ENCODE measurements at regions of chr15 and their contacts with region 1.

Region 1: DNA sequence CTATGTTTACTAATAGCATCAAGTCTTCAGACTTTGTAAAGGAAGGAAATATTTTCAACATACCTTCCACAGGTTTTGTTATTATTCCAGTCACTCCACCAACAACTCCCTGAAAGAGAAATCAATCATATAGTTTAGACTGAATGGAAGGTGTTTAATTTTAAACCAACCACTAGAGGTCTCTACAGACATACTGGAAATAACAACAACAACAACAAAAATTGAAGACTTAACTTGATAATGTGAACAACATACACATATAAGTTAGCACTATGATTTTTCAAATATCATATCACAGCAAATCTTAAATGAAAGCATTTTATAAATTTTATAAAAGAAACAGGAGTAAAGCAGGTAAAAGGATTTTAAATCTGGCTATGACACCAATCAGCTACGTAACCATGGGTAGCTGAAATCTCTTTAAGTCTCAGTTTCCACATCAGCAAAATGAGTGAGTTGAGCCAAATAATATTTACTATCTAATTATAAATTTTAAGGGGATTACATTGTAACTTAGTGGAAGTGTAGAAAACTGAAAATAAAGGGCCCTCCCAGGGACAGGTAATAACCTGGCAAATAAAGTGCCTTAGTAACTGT is 188.2 kb downstream of the VPS13C start:
- DNase-seq: no peak
- ATAC-seq: peak; percentile 75; the same call in 1 of the 2 replicates
- H3K4me3 ChIP-seq: no peak overlapping the region
- H3K27ac ChIP-seq: no peak overlapping the region
- H3K4me1 ChIP-seq: no peaks in the 10 kb centered on the region
- H3K27me3 ChIP-seq: no peaks in the 10 kb centered on the region
- CTCF ChIP-seq: peak; percentile 67; the same call in 1 of the 2 replicates

Region 2: GRCh38 chr15:62071711-62072308 is 199.8 kb after region 1 on chr15:
- CTCF ChIA-PET with region 1: no interaction called
- POLR2A ChIA-PET with region 1: no interaction called
- in situ Hi-C with region 1: no loop called
- intact Hi-C with region 1: loop called (anchors 5 kb)
- DNase-seq: no peak
- ATAC-seq: no peak
- H3K4me3 ChIP-seq: no peak overlapping the region
- H3K27ac ChIP-seq: no peak overlapping the region
- H3K4me1 ChIP-seq: peaks cover 7% of the 10 kb centered on the region
- H3K27me3 ChIP-seq: 0 out of 2 replicates have a peak, but pooled peaks cover 2% of the 10 kb centered on the region
- CTCF ChIP-seq: peak; percentile 75; the same call in 1 of the 2 replicates

Region 3: DNA sequence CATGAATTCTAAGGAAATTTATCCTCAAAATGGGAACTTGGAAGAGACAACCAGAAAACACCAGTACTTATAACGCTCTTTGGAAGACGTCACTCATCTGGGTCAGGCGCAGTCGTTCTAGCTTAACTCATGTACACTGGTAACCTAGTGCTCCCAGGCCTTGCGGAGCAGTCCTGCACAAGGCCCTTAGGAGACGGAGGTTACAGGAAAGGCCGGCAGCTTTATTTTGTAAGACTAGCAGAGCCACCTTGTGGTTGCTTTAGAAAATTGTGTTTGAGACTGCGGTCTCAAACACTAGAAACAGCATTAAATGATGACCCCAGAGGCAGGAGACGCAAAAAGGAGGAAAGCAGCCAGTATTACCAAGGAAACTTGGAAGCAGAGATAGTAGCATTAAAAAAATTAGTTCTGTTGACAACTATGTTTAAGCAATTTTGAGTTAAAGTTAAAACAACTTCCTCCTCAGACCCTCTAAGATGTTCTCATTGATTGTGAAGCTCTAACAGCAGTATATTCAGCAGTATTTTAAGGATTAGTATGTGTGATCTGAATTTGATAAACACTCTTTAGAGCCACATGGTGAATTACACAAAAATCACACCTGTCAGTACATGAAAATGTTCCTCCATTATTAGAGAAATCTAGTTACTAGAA is 435.0 kb after region 1 on chr15:
- CTCF ChIA-PET with region 1: no interaction called
- POLR2A ChIA-PET with region 1: no interaction called
- in situ Hi-C with region 1: no loop called
- intact Hi-C with region 1: loop called (anchors 10 kb)
- DNase-seq: peak; percentile 25
- ATAC-seq: peak; percentile 99
- H3K4me3 ChIP-seq: no peak overlapping the region
- H3K27ac ChIP-seq: no peak overlapping the region
- H3K4me1 ChIP-seq: no peaks in the 10 kb centered on the region
- H3K27me3 ChIP-seq: peaks cover 2% of the 10 kb centered on the region; the same call in 1 of the 2 replicates
- CTCF ChIP-seq: peak; percentile 82

Region 4: DNA sequence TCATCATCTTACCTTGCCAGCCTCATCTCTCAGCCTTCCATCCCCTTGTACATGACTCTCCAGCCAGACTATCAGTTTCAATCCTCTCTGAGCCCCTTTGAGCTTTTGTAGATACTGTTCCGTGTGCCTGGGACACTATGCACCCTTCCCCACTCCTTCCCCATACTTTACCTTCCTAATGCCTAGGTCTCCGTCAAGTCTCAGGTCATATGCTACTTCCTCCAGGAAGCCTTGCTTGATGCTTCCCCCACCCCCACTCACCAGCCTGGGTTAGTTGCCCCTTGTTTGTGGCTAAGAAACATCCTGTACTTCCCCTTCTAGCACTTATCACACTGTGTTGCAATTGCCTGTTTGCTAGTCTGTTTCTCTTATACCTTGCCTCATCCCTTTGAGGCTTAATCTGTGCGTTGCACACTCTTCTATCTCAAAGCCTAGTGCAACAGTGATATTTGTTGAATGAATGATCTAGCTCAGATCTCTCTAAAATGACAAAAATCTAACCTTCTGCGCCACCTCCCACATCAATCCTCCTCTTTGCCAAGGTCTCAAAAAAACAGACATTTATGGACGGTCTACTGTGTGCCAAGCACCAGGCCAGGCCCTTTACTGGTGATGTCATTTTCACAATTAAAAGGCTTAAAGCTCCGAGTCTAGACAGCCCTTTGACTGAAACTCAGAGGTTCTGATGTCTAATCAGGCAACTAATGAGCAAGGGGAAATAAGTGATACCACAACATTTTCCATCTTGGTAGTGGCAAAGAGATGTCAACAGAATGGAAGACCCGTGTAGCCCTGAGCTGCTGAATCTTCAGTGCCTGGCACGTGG is 1625.8 kb after region 1 on chr15:
- CTCF ChIA-PET with region 1: no interaction called
- POLR2A ChIA-PET with region 1: interaction called, 10 read pairs
- in situ Hi-C with region 1: no loop called
- intact Hi-C with region 1: no loop called
- DNase-seq: no peak
- ATAC-seq: no peak
- H3K4me3 ChIP-seq: no peak overlapping the region
- H3K27ac ChIP-seq: peak overlapping the region; percentile 65
- H3K4me1 ChIP-seq: peaks cover 80% of the 10 kb centered on the region
- H3K27me3 ChIP-seq: no peaks in the 10 kb centered on the region
- CTCF ChIP-seq: no peak

Measured in Panc1 (cell line).